ENCODE measurements at regions of chr17 and their contacts with region 1.

Region 1: GRCh38 chr17:530851-531250 is 178.2 kb upstream of the RPH3AL start:
- DNase-seq: no peak
- H3K4me3 ChIP-seq: no peak overlapping the region
- H3K4me3 Mint-ChIP-seq: no peak overlapping the region
- H3K27ac Mint-ChIP-seq: no peak overlapping the region
- H3K4me1 ChIP-seq: no peaks in the 10 kb centered on the region
- H3K4me1 Mint-ChIP-seq: no peaks in the 10 kb centered on the region
- H3K27me3 ChIP-seq: no peaks in the 10 kb centered on the region
- H3K27me3 Mint-ChIP-seq: no peaks in the 10 kb centered on the region
- CTCF ChIP-seq: no peak

Region 2: GRCh38 chr17:444879-445454 is 85.9 kb before region 1 on chr17:
- CTCF ChIA-PET with region 1: no interaction called
- POLR2A ChIA-PET with region 1: interaction called, 11 read pairs
- intact Hi-C with region 1: no loop called
- DNase-seq: no peak
- H3K4me3 ChIP-seq: no peak overlapping the region
- H3K4me3 Mint-ChIP-seq: no peak overlapping the region
- H3K27ac Mint-ChIP-seq: no peak overlapping the region
- H3K4me1 ChIP-seq: no peaks in the 10 kb centered on the region
- H3K4me1 Mint-ChIP-seq: no peaks in the 10 kb centered on the region
- H3K27me3 ChIP-seq: no peaks in the 10 kb centered on the region
- H3K27me3 Mint-ChIP-seq: peaks cover 3% of the 10 kb centered on the region
- CTCF ChIP-seq: no peak

Region 3: DNA sequence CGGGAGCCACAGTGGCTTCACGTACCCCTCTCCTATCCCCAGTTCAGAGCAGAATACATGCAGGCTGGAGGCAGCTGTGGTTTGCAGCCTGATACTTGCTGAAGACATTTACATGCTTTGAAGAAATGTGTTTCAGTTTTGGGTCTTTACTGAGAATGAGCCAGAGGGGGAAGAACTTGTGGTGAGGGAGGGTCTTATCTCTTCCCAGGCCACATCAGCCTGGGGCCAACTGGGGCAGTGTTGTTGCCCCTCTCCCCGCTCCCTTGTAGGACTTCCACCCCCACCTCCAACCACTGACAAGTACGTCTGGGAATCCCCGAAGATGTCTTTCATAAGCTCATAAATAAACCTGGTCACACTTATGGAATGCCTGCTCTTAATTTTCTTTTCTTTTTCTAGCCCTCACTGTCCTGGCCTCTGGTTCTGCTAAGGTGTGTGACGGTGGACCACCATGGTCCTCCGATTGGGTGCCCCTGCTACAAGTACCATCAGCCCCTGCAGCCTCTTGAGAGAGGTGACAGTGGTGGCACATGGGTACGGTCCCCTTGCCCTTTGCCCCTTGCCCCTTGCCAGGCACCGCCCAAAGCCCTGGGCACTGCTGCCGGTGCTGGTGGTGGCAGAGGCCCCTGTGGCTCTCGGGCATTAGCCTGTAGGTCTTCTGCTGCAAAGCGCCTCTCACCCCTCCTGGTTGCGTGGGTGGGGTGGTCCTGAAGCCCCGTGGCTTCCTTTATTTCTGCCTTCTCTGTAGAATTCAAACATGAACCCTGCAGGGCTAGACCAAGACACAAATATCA is 33.4 kb before region 1 on chr17:
- CTCF ChIA-PET with region 1: no interaction called
- POLR2A ChIA-PET with region 1: no interaction called
- intact Hi-C with region 1: no loop called
- DNase-seq: no peak
- H3K4me3 ChIP-seq: no peak overlapping the region
- H3K4me3 Mint-ChIP-seq: no peak overlapping the region
- H3K27ac Mint-ChIP-seq: no peak overlapping the region
- H3K4me1 ChIP-seq: no peaks in the 10 kb centered on the region
- H3K4me1 Mint-ChIP-seq: no peaks in the 10 kb centered on the region
- H3K27me3 ChIP-seq: peaks cover 2% of the 10 kb centered on the region
- H3K27me3 Mint-ChIP-seq: peaks cover 6% of the 10 kb centered on the region
- CTCF ChIP-seq: no peak